Activated naive CD4-positive, alpha-beta T cell treated with anti-CD3 and anti-CD28 coated beads for 36 hours (primary cell): ENCODE measurements at regions of chr1 and their contacts with region 1.

Region 1: DNA sequence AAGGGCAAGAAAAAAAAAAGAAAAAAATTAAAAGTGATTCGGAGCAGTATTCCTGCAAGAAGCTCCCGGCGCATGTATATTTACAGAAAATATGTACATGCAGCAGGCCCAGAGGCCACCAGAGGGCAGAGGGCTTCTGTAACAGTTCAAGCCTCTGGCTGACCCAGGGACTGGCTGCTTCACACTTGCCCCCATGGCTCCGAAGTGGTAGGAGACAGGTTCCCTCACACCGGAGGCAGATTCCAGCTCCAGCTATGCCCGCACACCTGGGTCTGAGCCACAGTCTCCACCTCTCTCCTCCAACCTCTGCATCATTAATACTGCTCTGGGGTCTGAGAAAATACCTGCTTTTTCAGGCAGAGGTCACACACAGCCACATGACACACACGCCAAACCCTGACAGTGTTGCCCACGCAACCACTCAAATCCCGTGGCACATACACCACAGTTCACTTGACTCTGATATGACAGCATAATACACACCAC is 2.2 kb upstream of the ARHGAP30 start:
- DNase-seq: peak; percentile 72
- H3K4me3 Mint-ChIP-seq: no peak overlapping the region
- H3K27ac Mint-ChIP-seq: no peak overlapping the region
- H3K4me1 Mint-ChIP-seq: peaks cover 29% of the 10 kb centered on the region
- H3K27me3 Mint-ChIP-seq: no peaks in the 10 kb centered on the region

Region 2: DNA sequence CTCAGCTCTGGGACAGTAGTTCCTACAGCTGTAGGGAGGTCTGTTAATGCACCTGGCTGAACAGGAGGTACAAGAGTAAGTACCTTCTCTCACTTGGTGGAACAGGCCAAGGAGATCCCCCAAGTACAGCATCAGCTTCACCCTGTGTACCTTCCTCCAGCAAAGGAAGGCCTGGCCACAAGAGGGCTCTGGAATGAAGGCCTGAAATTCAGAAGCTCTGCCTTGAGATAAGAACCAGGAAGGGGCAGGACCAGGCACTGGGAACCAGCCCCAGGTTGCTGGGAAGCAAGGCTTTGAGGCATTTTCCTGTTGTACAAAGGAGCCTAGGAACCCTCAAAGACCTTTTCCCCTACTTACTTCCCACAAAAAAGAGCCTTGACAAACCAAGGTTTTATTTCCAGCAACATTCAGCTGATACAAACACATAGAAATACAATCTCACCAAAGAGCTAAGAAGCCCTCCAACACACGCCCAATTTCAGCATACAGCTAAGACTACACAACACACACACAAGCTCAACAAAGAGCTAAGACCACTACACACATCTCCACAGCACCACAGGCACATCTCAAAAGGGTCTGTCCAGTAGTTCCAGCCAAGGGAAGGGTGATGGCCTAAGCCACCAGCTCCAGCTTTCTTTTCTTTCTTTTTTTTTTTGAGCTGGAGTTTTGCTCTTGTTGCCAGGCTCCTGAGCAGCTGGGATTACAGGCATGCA is 74.4 kb before region 1 on chr1:
- CTCF ChIA-PET with region 1: interaction called, 10 read pairs
- intact Hi-C with region 1: loop called (anchors 2 kb)
- DNase-seq: peak; percentile 77
- H3K4me3 Mint-ChIP-seq: no peak overlapping the region
- H3K27ac Mint-ChIP-seq: peak overlapping the region; percentile 1
- H3K4me1 Mint-ChIP-seq: peaks cover 6% of the 10 kb centered on the region
- H3K27me3 Mint-ChIP-seq: no peaks in the 10 kb centered on the region

Region 3: DNA sequence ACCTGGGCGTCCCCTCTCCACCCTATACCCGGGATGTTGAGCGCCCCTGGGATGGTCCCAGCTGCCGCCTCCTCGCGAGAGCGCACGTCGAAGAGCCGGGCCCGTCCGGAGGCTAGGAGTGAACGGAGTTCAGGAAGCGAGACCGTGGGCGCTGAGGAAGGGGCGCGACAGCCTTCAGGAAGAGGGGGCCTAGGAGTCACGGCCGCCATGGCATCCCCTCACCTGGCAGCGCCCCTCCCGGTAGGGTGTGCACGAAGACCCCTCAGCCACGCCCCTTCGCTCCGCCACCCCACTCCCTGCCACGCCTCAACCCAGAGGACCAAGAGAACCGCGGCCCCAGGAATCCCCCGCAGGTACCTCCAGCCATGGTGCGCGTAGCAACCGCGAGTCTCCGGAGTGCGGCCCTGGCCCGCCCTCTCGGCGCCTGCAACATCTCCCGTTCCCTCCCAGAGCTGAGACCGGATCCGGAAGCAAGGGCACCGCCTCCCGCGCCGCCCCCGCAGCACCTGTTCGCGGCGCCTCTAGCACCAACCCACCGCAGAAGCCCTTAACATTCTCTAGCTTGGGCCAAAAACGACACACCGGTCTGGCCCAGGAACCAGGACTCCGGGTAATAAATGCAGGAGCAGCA is 33.3 kb before region 1 on chr1 and contains the start of gene TSTD1:
- CTCF ChIA-PET with region 1: interaction called, 14 read pairs
- intact Hi-C with region 1: no loop called
- DNase-seq: peak; percentile 92
- H3K4me3 Mint-ChIP-seq: peak within 1 kb of the TSS; percentile 88
- H3K27ac Mint-ChIP-seq: peak within 1 kb of the TSS; percentile 77
- H3K4me1 Mint-ChIP-seq: peaks cover 36% of the 10 kb centered on the region
- H3K27me3 Mint-ChIP-seq: no peaks in the 10 kb centered on the region
- total RNA-seq, gene TSTD1: 50.3 to 51.5 TPM

Region 4: DNA sequence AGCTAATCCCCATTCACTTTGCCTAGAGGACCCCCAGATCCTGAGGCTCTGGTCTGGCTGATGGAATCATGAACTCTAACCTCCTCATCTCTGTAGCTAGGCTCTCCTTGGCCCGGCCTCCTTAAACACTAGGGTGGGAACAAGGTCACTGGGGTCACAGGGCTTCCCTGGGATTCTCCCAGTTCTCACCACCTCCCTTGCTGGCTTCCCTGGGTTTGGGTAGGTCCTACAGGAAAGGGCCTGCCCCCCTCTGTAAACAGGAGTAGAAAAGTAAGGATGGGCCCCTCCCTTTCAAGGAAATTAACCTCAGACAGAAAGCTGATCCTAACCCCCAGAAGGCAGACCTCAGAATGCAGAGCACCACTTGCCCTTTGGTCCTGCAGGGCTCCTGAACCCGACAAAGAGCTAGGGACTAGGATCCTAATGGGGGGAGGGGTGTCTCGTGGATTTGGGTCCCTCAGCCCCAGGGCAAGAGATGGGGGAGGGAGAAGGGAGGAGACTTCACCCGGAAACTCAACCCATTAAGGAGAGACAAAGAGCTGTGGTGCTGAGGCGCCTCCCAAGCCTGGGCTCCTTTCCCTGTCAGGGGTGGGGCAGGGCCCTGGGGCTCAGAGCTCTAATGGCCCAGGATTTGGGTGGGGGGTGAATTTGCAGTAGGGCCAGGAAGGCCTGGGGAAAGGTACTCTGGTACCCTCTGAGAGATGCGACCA is 14.4 kb after region 1 on chr1:
- CTCF ChIA-PET with region 1: interaction called, 11 read pairs
- intact Hi-C with region 1: no loop called
- DNase-seq: no peak
- H3K4me3 Mint-ChIP-seq: no peak overlapping the region
- H3K27ac Mint-ChIP-seq: no peak overlapping the region
- H3K4me1 Mint-ChIP-seq: peaks cover 14% of the 10 kb centered on the region
- H3K27me3 Mint-ChIP-seq: no peaks in the 10 kb centered on the region

Region 5: GRCh38 chr1:161119092-161119903 is 47.4 kb after region 1 on chr1:
- CTCF ChIA-PET with region 1: interaction called, 9 read pairs
- intact Hi-C with region 1: loop called (anchors 1 kb)
- DNase-seq: peak; percentile 86
- H3K4me3 Mint-ChIP-seq: peak overlapping the region; percentile 92
- H3K27ac Mint-ChIP-seq: peak overlapping the region; percentile 88
- H3K4me1 Mint-ChIP-seq: peaks cover 64% of the 10 kb centered on the region
- H3K27me3 Mint-ChIP-seq: no peaks in the 10 kb centered on the region

Region 6: GRCh38 chr1:161153679-161154426 is 81.9 kb after region 1 on chr1 and contains the start of gene UFC1:
- CTCF ChIA-PET with region 1: interaction called, 3 read pairs
- intact Hi-C with region 1: loop called (anchors 1 kb)
- DNase-seq: peak; percentile 88
- H3K4me3 Mint-ChIP-seq: peak within 1 kb of the TSS; percentile 95
- H3K27ac Mint-ChIP-seq: peak within 1 kb of the TSS; percentile 99
- H3K4me1 Mint-ChIP-seq: peaks cover 22% of the 10 kb centered on the region
- H3K27me3 Mint-ChIP-seq: no peaks in the 10 kb centered on the region
- total RNA-seq, gene UFC1: 89.4 to 94.9 TPM